A673 (cell line): ENCODE measurements at regions of chr16 and their contacts with region 1.

Region 1: DNA sequence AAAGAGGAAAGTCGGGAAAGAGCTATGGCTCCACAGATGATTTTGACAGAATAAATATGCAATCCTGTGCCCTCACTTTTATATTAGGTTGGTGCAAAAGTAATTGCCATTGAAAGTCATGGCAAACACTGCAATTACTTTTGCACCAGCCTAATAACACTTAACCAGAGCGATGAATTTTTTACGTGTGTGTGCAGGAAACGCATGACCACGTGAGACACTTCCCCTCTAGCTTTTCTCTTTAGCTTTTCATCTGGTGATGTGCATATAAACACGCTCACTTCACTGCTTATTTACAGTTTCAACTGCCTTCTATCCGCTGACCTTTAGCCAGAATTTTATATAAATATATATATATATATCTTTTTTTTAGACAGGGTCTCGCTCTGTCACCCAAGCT is 216.3 kb upstream of the PSMD7 start:
- DNase-seq: no peak
- H3K4me3 ChIP-seq: no peak overlapping the region
- H3K27ac ChIP-seq: no peak overlapping the region
- H3K4me1 ChIP-seq: peaks cover 20% of the 10 kb centered on the region
- H3K27me3 ChIP-seq: no peaks in the 10 kb centered on the region
- CTCF ChIP-seq: no peak

Region 2: GRCh38 chr16:73095885-73096421 is 984.4 kb before region 1 on chr16:
- CTCF ChIA-PET with region 1: no interaction called
- POLR2A ChIA-PET with region 1: interaction called, 13 read pairs
- intact Hi-C with region 1: no loop called
- DNase-seq: peak; percentile 62
- H3K4me3 ChIP-seq: no peak overlapping the region
- H3K27ac ChIP-seq: no peak overlapping the region
- H3K4me1 ChIP-seq: peaks cover 23% of the 10 kb centered on the region
- H3K27me3 ChIP-seq: no peaks in the 10 kb centered on the region
- CTCF ChIP-seq: no peak

Region 3: DNA sequence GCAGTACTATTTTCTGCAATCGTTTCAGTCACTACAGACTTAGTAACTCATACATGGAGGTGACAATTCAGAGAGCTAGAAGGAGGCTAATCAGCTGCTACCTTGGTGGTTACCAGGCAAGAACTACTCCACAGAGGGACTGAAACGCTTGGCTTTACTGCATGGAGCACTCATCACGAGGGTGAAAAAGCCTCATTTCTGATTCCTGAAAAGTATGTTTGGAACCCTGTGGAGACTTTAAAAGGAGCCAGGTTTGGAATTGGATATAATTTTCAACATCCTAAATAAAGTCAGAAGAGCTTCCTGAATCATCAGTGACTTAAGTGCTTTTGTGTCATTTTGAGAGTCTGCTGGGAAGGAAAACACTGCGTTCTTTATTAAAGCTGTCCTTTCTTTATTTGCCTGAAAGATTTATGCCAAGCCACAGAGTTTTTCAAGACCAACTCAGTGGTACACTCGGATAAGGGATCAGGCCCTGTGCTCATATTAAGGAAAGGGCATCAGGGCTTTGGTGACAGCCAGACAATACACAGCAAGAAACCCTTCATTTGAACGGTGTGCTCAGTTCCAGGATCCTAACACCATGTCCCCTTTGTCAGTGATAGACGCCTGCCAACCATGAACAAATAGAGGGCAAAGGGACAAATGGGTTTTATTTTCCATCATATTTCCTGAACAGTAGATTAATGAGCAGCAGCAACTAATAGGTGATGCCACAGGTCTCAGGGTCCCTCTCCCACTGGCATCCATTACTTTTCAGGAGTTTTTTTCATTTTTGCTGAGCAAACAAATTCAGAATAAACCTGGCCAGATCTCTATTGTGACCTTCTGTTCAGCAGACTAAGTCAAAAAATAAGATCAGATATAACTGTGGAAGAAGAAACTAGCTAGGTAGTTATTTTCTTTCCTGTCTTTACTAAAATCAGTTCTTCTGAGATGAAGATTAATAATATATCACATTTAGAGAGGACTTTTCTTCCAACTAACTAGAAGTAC is 421.5 kb after region 1 on chr16:
- CTCF ChIA-PET with region 1: no interaction called
- POLR2A ChIA-PET with region 1: no interaction called
- intact Hi-C with region 1: no loop called
- DNase-seq: peak; percentile 91
- H3K4me3 ChIP-seq: no peak overlapping the region
- H3K27ac ChIP-seq: peak overlapping the region; percentile 77
- H3K4me1 ChIP-seq: peaks cover 80% of the 10 kb centered on the region
- H3K27me3 ChIP-seq: no peaks in the 10 kb centered on the region
- CTCF ChIP-seq: no peak